Kidney (tissue), 22 donors: ENCODE measurements at regions of chr18 and their contacts with region 1.

Region 1: GRCh38 chr18:39259736-39260135 is 1694.1 kb upstream of the CELF4 start:
- DNase-seq: peak in 1 of 5 donors; percentile 33
- H3K4me3 ChIP-seq: no peak overlapping the region
- H3K27ac ChIP-seq: no peak overlapping the region
- H3K4me1 ChIP-seq: no peaks in the 10 kb centered on the region
- H3K27me3 ChIP-seq: no peaks in the 10 kb centered on the region
- CTCF ChIP-seq: no peak

Region 2: DNA sequence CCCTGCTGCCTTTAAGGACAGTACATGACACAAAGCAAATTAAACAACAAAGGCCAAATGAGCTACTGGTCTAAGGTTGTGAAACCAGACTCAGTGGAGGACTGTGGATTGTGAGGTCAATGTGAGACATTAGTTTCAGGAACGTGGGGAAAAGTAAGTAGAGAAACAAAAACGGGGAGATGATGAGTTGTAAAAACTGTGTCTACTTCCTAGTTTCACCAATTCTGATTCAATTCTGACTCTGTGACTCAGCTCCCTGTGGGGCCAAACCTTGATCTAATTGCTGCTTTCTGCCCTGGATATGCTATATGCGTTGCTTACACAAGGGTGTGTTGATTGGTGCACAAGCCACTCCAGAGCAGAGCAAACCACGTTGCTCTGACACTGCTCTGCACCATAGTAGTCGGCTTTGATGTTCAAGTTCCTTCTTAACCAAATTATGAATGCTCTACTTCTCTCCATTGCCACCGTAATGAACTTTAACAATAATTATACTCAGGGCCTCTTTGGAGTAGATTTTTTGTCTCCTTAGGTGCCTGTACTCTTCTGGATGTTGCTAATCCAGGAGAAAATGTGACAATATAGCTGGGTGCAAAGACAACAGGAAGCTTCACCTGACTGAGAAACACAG is 54.1 kb before region 1 on chr18:
- intact Hi-C with region 1: loop called (anchors 10 kb)
- DNase-seq: no peak
- H3K4me3 ChIP-seq: no peak overlapping the region
- H3K27ac ChIP-seq: no peak overlapping the region
- H3K4me1 ChIP-seq: no peaks in the 10 kb centered on the region
- H3K27me3 ChIP-seq: no peaks in the 10 kb centered on the region
- CTCF ChIP-seq: no peak